ENCODE measurements at regions of chr10 and their contacts with region 1.

Region 1: DNA sequence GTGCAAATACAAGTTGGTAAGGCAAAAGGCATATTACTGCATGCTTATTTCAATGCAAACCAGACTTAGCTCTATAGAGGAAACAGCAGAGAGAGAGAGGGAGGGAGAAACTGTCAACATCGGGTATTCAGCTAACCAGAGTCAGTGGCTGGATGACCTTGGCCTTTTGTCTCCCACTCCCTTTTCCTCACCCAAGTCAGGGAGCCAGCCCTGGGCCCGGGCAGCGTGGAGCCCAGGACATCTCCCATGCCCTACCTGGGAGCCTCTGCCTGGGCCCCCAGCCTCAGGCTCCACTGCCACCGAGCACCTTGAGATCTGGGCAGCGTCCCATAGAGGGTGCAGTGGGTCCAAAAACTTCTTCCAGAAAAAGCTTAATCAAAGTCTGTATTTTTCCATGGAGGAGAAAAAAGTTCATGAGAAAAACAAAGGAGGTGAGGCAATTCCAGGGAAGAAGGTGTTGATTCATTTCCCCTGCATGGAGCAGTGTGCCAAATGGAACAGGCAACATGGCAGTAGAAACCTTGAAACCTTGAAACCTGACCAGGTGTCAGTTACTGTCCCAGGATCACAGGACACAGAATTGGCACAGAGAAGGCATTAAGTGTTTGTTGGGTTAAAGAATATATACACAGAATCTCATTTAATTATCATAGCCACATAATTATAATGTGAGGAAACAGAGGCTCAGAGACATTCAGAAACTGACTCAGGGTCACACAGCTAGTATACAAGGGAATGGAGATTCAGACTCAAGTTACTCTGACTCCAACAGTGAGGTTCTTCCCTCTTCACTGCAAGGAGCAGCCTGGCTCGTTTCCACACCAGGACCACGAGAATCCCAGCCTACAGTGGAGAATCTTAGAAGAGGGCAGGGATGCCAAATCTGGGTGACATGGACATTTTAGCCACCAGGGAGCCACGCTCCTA is 5.8 kb upstream of the NCOA4 start:
- DNase-seq: peak in 1 of 2 experiments; percentile 54
- H3K4me3 ChIP-seq: no peak overlapping the region
- H3K27ac ChIP-seq: no peak overlapping the region
- H3K4me1 ChIP-seq: peaks cover 44% of the 10 kb centered on the region
- H3K27me3 ChIP-seq: no peaks in the 10 kb centered on the region
- CTCF ChIP-seq: peak; percentile 32; the same call in 1 of the 2 replicates

Region 2: DNA sequence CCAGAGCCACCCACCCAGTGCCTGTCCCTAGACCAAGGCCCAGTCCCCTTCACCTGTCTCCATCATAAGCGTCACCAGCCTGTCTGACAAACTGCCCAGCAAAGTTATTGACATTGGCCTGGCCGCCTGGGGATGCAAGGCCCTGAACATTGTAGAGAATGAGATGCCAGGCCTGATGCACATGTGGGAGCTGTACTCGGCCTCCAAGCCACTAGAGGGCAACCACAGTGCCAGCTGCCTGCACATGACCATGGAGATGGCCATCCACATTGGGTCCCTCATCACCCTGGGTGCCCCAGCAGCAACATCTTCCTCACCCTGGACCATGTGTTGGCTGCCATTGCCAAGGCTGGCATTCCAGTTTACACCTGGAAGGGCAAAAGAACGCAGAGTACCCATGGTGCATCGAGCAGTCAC is 186.9 kb after region 1 on chr10:
- CTCF ChIA-PET with region 1: no interaction called
- POLR2A ChIA-PET with region 1: no interaction called
- intact Hi-C with region 1: loop called (anchors 5 kb)
- DNase-seq: no peak
- H3K4me3 ChIP-seq: no peak overlapping the region
- H3K27ac ChIP-seq: peak overlapping the region; percentile 61
- H3K4me1 ChIP-seq: peaks cover 20% of the 10 kb centered on the region
- H3K27me3 ChIP-seq: no peaks in the 10 kb centered on the region
- CTCF ChIP-seq: peak; percentile 56